ENCODE measurements at regions of chr1 and their contacts with region 1.

Region 1: DNA sequence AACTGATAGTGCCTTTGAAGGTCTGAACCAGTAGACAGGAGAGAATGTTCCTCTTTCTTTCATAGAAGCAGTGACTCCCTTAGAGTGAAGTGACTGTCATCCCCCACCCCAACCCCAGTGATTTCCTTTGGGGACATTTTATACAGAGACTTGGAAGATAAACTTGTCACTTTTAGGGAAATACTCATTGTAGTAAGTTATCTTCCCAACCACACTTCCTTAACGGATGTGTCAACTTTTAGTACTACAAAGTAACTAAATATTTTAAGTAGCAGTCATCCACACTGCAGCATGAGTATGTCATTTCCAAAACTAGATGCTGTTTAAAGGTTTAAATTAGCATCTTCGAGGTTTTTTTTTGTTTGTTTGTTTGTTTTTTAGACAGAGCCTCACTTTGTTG is 13.7 kb downstream of the LRRC8B start:
- DNase-seq: peak; percentile 40 to 59 (median 56)
- H3K4me3 ChIP-seq: no peak overlapping the region
- H3K4me3 Mint-ChIP-seq: no peak overlapping the region
- H3K27ac ChIP-seq: peak overlapping the region in 1 of 2 donors; percentile 54
- H3K27ac Mint-ChIP-seq: peak overlapping the region; percentile 18 to 77 (median 47)
- H3K4me1 ChIP-seq: peaks cover 16 to 25% of the 10 kb centered on the region in 2 donors
- H3K4me1 Mint-ChIP-seq: peaks cover 33% of the 10 kb centered on the region
- H3K27me3 ChIP-seq: no peaks in the 10 kb centered on the region
- H3K27me3 Mint-ChIP-seq: peaks cover 0 to 1% (median 0%) of the 10 kb centered on the region in 3 donors
- CTCF ChIP-seq: no peak

Region 2: GRCh38 chr1:89483010-89483756 is 55.2 kb before region 1 on chr1:
- intact Hi-C with region 1: no loop called
- DNase-seq: peak; percentile 56 to 75 (median 70)
- H3K4me3 ChIP-seq: no peak overlapping the region
- H3K4me3 Mint-ChIP-seq: no peak overlapping the region
- H3K27ac ChIP-seq: no peak overlapping the region
- H3K27ac Mint-ChIP-seq: no peak overlapping the region
- H3K4me1 ChIP-seq: peaks cover under 1 to 16% of the 10 kb centered on the region in 2 donors
- H3K4me1 Mint-ChIP-seq: peaks cover 14% of the 10 kb centered on the region
- H3K27me3 ChIP-seq: no peaks in the 10 kb centered on the region
- H3K27me3 Mint-ChIP-seq: peaks cover 1 to 3% (median 2%) of the 10 kb centered on the region in 3 donors
- CTCF ChIP-seq: peak; percentile 87

Region 3: GRCh38 chr1:89499320-89499719 is 39.0 kb before region 1 on chr1:
- intact Hi-C with region 1: no loop called
- DNase-seq: no peak
- H3K4me3 ChIP-seq: no peak overlapping the region
- H3K4me3 Mint-ChIP-seq: no peak overlapping the region
- H3K27ac ChIP-seq: no peak overlapping the region
- H3K27ac Mint-ChIP-seq: no peak overlapping the region
- H3K4me1 ChIP-seq: no peaks in the 10 kb centered on the region
- H3K4me1 Mint-ChIP-seq: peaks cover 3% of the 10 kb centered on the region
- H3K27me3 ChIP-seq: no peaks in the 10 kb centered on the region
- H3K27me3 Mint-ChIP-seq: peaks cover 0 to 1% (median 0%) of the 10 kb centered on the region in 3 donors
- CTCF ChIP-seq: no peak

Region 4: DNA sequence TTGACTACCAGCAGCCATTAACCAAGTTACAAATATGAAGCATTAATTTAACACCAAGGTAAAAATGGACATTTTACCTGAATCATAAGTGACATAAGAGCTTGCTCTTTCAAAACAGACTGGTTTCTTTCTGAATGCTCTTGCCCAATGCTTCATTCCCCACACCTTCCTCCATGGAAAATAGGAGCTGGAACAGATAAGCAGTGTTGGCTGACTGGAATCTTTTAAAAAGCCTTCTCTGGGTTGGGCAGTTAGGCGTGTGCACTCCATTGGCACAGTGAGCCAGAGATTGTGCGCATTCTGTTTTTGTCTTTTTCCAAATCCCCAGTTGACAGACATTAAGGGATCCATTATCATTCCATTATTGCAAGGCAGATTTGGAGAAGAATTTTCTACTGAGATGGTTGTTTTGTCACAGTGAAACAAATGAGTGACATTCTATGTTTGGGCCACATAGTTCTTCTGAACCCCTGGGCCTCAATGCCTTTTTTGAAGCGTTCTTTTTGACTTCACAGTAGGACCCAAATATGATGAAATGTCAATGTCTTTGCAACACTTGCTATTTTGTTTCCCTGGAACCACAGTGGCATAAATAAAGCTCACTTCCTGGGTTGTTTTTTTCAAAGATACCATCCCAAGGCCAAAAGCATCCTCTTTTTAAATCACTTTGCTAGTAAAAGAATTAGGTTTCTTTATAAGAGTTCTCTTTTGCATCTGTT is 18.5 kb after region 1 on chr1:
- intact Hi-C with region 1: no loop called
- DNase-seq: peak; percentile 75 to 88 (median 85)
- H3K4me3 ChIP-seq: peak overlapping the region in 1 of 3 experiments; percentile 35
- H3K4me3 Mint-ChIP-seq: peak overlapping the region in 1 of 2 donors; percentile 69
- H3K27ac ChIP-seq: peak overlapping the region; percentile 85 to 97
- H3K27ac Mint-ChIP-seq: peak overlapping the region; percentile 92 to 98 (median 97)
- H3K4me1 ChIP-seq: peaks cover 56 to 71% of the 10 kb centered on the region in 2 donors
- H3K4me1 Mint-ChIP-seq: peaks cover 56% of the 10 kb centered on the region
- H3K27me3 ChIP-seq: no peaks in the 10 kb centered on the region
- H3K27me3 Mint-ChIP-seq: peaks cover 0 to 2% (median 0%) of the 10 kb centered on the region in 3 donors
- CTCF ChIP-seq: no peak

Region 5: DNA sequence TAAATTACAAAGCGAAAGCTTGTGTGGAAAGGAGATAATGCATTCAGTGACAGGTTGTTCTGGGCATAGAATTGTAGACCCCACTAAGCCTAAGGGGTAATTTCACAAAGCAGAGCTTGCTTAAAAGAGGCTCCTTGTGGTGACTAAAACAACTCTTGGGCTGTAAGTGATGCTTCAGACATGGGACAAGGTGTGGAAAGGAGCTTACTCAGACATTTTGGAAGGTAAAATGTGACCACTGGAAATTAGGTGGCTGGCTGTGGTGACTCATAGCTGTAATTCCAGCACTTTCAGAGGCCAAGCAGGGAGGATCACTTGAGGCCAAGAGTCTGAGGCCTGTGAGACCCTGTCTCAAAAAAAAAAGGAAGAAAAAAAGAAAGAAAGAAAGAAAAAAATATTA is 43.5 kb after region 1 on chr1:
- intact Hi-C with region 1: loop called in 1 of 2 experiments (anchors 5 kb)
- DNase-seq: no peak
- H3K4me3 ChIP-seq: no peak overlapping the region
- H3K4me3 Mint-ChIP-seq: no peak overlapping the region
- H3K27ac ChIP-seq: no peak overlapping the region
- H3K27ac Mint-ChIP-seq: peak overlapping the region in 1 of 7 donors; percentile 22
- H3K4me1 ChIP-seq: no peaks in the 10 kb centered on the region
- H3K4me1 Mint-ChIP-seq: no peaks in the 10 kb centered on the region
- H3K27me3 ChIP-seq: no peaks in the 10 kb centered on the region
- H3K27me3 Mint-ChIP-seq: no peaks in the 10 kb centered on the region
- CTCF ChIP-seq: no peak

Region 6: DNA sequence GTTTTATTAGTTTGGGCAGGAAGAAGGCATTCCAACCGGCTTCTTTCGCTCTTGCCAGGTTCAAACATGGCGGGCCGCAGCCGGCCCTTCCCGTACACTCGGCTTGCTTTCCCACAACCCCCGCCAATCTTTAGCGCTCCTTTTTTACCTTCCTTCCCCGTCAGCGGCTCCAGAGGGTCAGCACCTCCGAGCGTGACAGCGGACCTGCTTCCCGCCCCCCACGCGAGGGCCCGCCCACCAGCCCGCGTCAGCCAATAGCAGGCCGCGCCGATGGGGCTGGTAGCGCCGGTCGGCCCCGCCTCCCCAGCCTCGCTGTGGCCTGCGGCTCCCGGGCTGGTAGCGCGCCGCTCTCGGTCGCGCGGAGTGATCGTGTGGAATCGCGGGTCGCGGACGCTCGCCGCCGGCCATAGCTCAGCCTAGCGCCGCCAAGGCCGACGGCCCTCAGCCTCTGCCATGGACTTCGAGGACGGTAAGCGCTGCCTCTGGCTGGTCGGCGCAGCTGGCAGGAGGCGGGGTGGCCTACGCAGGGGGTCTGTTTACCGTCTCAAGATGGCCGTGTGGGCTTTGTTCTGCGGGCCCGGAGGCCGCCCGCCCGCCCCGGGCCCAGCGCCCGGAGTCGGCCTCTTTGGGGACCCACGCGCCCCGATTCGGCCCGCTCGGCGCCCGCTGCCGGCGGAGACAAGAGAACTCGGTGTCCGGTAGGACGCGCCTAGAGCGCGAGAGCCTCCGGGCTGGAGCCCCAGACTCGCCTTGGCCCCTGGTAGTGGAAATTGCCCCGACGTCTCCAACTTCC is 456.6 kb after region 1 on chr1 and contains the start of gene ZNF326:
- intact Hi-C with region 1: loop called in 1 of 2 experiments (anchors 10 kb)
- DNase-seq: peak; percentile 88 to 91 (median 91)
- H3K4me3 ChIP-seq: peak within 1 kb of the TSS; percentile 73 to 85 (median 78)
- H3K4me3 Mint-ChIP-seq: peak within 1 kb of the TSS; percentile 97 to 99
- H3K27ac ChIP-seq: peak within 1 kb of the TSS; percentile 90 to 94
- H3K27ac Mint-ChIP-seq: peak within 1 kb of the TSS; percentile 94 to 99 (median 97)
- H3K4me1 ChIP-seq: peaks cover 16 to 25% of the 10 kb centered on the region in 2 donors
- H3K4me1 Mint-ChIP-seq: peaks cover 28% of the 10 kb centered on the region
- H3K27me3 ChIP-seq: no peaks in the 10 kb centered on the region
- H3K27me3 Mint-ChIP-seq: peaks cover 0 to 4% (median 1%) of the 10 kb centered on the region in 3 donors
- CTCF ChIP-seq: no peak
- polyA plus RNA-seq, gene ZNF326: 3.8 to 5.0 (median 4.5) TPM

Measured in CD14-positive monocyte (primary cell).